Activated CD4-positive, alpha-beta memory T cell treated with anti-CD3 and anti-CD28 coated beads, Interleukin-2, amount 10 ng/mL, durations not matched to agents 7 days and 5 days (primary cell): ENCODE measurements at regions of chr1 and their contacts with region 1.

Region 1: GRCh38 chr1:92476071-92476631 is 10.6 kb downstream of the GFI1 start:
- DNase-seq: peak; percentile 63
- H3K4me3 Mint-ChIP-seq: peak overlapping the region; percentile 37
- H3K27ac Mint-ChIP-seq: peak overlapping the region; percentile 58
- H3K4me1 Mint-ChIP-seq: peaks cover 84% of the 10 kb centered on the region
- H3K27me3 Mint-ChIP-seq: no peaks in the 10 kb centered on the region

Region 2: GRCh38 chr1:92244376-92244775 is 231.8 kb before region 1 on chr1:
- CTCF ChIA-PET with region 1: no interaction called
- POLR2A ChIA-PET with region 1: no interaction called
- DNase-seq: no peak
- H3K4me3 Mint-ChIP-seq: no peak overlapping the region
- H3K27ac Mint-ChIP-seq: no peak overlapping the region
- H3K4me1 Mint-ChIP-seq: no peaks in the 10 kb centered on the region
- H3K27me3 Mint-ChIP-seq: peaks cover 2% of the 10 kb centered on the region

Region 3: GRCh38 chr1:92310185-92310597 is 166.0 kb before region 1 on chr1:
- CTCF ChIA-PET with region 1: interaction called, 89 read pairs
- POLR2A ChIA-PET with region 1: interaction called, 306 read pairs
- DNase-seq: no peak
- H3K4me3 Mint-ChIP-seq: no peak overlapping the region
- H3K27ac Mint-ChIP-seq: no peak overlapping the region
- H3K4me1 Mint-ChIP-seq: peaks cover 38% of the 10 kb centered on the region
- H3K27me3 Mint-ChIP-seq: no peaks in the 10 kb centered on the region

Region 4: DNA sequence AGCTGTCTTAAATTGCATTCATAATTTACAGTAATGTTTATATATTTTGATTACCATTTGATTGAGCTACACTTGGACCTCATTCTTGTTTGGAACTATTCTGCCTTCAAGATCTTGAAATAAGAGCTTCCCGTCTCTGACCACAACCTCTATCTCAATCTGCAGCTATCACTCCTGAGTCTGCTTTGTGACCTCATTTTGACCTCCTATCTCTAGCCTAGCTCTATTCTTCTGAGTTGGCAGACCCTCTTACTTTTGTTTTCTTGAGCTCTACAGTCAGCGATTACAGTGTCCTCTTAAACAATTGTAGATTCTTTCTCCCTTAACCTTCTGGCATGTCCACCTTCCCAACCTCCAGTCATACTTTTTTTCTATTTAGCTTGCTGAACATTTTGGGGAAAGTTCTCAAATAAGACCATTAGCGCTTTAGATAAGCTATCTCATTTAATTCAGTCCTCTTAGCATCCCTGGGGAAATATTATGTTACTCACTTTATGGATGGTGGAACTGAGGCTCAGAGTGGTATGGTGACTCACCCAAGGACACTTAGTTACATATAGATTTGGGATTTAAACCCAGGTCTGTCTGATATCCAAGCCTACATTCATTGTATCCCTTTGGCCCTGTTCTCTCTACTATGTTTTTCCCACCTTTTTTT is 158.2 kb before region 1 on chr1:
- CTCF ChIA-PET with region 1: interaction called, 89 read pairs
- POLR2A ChIA-PET with region 1: interaction called, 306 read pairs
- DNase-seq: peak; percentile 36
- H3K4me3 Mint-ChIP-seq: peak overlapping the region; percentile 25
- H3K27ac Mint-ChIP-seq: peak overlapping the region; percentile 85
- H3K4me1 Mint-ChIP-seq: peaks cover 67% of the 10 kb centered on the region
- H3K27me3 Mint-ChIP-seq: no peaks in the 10 kb centered on the region

Region 5: GRCh38 chr1:92461364-92462097 is 14.6 kb before region 1 on chr1:
- CTCF ChIA-PET with region 1: interaction called, 9 read pairs
- POLR2A ChIA-PET with region 1: interaction called, 55 read pairs
- DNase-seq: no peak
- H3K4me3 Mint-ChIP-seq: no peak overlapping the region
- H3K27ac Mint-ChIP-seq: no peak overlapping the region
- H3K4me1 Mint-ChIP-seq: peaks cover 67% of the 10 kb centered on the region
- H3K27me3 Mint-ChIP-seq: no peaks in the 10 kb centered on the region

Region 6: GRCh38 chr1:92536980-92537884 is 61.1 kb after region 1 on chr1:
- CTCF ChIA-PET with region 1: interaction called, 7 read pairs
- POLR2A ChIA-PET with region 1: interaction called, 372 read pairs
- DNase-seq: no peak
- H3K4me3 Mint-ChIP-seq: peak overlapping the region; percentile 59
- H3K27ac Mint-ChIP-seq: peak overlapping the region; percentile 88
- H3K4me1 Mint-ChIP-seq: peaks cover 79% of the 10 kb centered on the region
- H3K27me3 Mint-ChIP-seq: no peaks in the 10 kb centered on the region

Region 7: GRCh38 chr1:92778376-92778775 is 302.2 kb after region 1 on chr1:
- CTCF ChIA-PET with region 1: no interaction called
- POLR2A ChIA-PET with region 1: no interaction called
- DNase-seq: no peak
- H3K4me3 Mint-ChIP-seq: no peak overlapping the region
- H3K27ac Mint-ChIP-seq: no peak overlapping the region
- H3K4me1 Mint-ChIP-seq: peaks cover 4% of the 10 kb centered on the region
- H3K27me3 Mint-ChIP-seq: peaks cover 59% of the 10 kb centered on the region